B cell (primary cell): ENCODE measurements at regions of chr17 and their contacts with region 1.

Region 1: GRCh38 chr17:19992803-19993713 is 15.4 kb upstream of the AKAP10 start:
- DNase-seq: peak; percentile 86
- ATAC-seq: peak; percentile 99
- H3K4me3 ChIP-seq: no peak overlapping the region
- H3K4me3 Mint-ChIP-seq: no peak overlapping the region
- H3K27ac ChIP-seq: no peak overlapping the region
- H3K27ac Mint-ChIP-seq: no peak overlapping the region
- H3K4me1 ChIP-seq: peaks cover 3% of the 10 kb centered on the region in 2 donors
- H3K4me1 Mint-ChIP-seq: peaks cover 6% of the 10 kb centered on the region
- H3K27me3 ChIP-seq: peaks cover 0 to 6% (median 0%) of the 10 kb centered on the region in 4 experiments
- H3K27me3 Mint-ChIP-seq: peaks cover 28% of the 10 kb centered on the region
- CTCF ChIP-seq: peak; percentile 80

Region 2: DNA sequence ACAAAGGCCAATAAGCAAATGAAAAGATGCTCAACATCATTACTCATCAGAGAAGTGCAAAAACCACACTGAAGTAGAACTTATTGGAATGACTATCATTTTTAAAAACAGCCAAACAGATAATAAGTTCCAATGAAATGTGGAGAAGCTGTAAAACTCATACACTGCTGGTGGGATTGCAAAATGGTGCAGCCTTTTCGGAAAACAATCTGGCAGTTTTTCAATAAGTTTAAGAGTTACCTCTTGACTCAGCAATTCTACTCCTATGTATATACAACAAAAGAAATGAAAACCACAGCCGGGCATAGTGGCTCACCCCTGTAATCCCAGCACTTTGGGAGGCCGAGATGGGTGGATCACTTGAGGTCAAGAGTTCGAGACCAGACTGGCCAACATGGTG is 64.8 kb before region 1 on chr17:
- CTCF ChIA-PET with region 1: no interaction called
- POLR2A ChIA-PET with region 1: no interaction called
- intact Hi-C with region 1: no loop called
- DNase-seq: no peak
- ATAC-seq: no peak
- H3K4me3 ChIP-seq: no peak overlapping the region
- H3K4me3 Mint-ChIP-seq: no peak overlapping the region
- H3K27ac ChIP-seq: no peak overlapping the region
- H3K27ac Mint-ChIP-seq: no peak overlapping the region
- H3K4me1 ChIP-seq: no peaks in the 10 kb centered on the region
- H3K4me1 Mint-ChIP-seq: no peaks in the 10 kb centered on the region
- H3K27me3 ChIP-seq: no peaks in the 10 kb centered on the region
- H3K27me3 Mint-ChIP-seq: no peaks in the 10 kb centered on the region
- CTCF ChIP-seq: no peak

Region 3: DNA sequence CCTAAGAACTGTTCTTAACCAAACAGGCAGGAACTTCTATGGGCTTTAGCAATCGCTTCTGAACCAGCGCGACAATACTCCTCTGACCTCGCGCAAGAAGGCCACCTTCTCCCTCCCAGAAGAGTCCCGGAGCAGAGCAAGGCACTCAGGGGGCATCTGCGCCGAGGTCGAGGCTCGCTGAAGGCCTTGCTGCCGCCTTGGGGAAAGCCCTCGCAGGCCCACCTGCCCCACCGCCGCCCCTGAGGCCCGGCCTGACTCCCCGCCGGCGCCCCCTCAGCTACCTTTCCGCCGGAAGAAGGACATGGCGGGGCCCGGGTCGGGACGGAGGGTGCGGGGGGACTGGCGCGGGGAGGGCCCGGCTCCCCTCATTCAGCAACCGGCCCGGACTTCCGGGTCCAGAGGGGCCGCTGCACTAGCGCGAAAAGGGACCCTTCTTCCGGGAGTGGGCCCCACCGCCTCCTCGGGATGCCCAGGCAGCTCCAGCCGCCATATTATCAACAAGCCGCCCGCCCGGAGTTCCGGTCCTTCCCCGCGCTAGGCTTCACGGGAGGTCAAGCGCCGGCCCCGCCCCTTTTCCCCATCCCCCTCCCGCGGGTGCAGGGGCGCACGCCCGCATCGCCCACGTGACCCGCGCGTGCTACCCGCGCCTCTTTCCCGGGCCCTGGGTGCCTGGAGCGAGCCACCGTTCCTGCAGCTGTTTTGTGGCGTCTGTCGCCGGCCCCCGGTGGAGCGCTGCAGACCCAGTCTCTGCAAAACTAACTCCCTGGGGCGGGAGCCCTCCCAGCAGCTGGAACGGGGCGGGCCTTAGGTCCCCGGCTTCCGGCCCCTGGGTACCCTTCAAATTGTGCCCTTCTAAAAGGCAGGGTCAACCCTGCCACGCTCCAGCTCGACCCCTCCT is 15.5 kb before region 1 on chr17 and contains the start of gene AKAP10:
- CTCF ChIA-PET with region 1: interaction called, 12 read pairs
- POLR2A ChIA-PET with region 1: no interaction called
- intact Hi-C with region 1: no loop called
- DNase-seq: peak; percentile 94
- ATAC-seq: peak; percentile 87
- H3K4me3 ChIP-seq: peak within 1 kb of the TSS; percentile 83 to 93 (median 90)
- H3K4me3 Mint-ChIP-seq: peak within 1 kb of the TSS; percentile 99
- H3K27ac ChIP-seq: peak within 1 kb of the TSS; percentile 85 to 96
- H3K27ac Mint-ChIP-seq: peak within 1 kb of the TSS; percentile 98
- H3K4me1 ChIP-seq: peaks cover 23 to 40% of the 10 kb centered on the region in 2 donors
- H3K4me1 Mint-ChIP-seq: peaks cover 47% of the 10 kb centered on the region
- H3K27me3 ChIP-seq: no peaks in the 10 kb centered on the region
- H3K27me3 Mint-ChIP-seq: no peaks in the 10 kb centered on the region
- CTCF ChIP-seq: no peak
- total RNA-seq, gene AKAP10: 68.2 and 71.2 TPM in 2 replicates

Region 4: GRCh38 chr17:20009302-20010098 is 16.4 kb after region 1 on chr17 and contains the start of gene SPECC1:
- CTCF ChIA-PET with region 1: interaction called, 23 read pairs
- POLR2A ChIA-PET with region 1: no interaction called
- intact Hi-C with region 1: loop called (anchors 1 kb)
- DNase-seq: peak; percentile 90
- ATAC-seq: peak; percentile 98
- H3K4me3 ChIP-seq: peak within 1 kb of the TSS; percentile 64 to 74 (median 68)
- H3K4me3 Mint-ChIP-seq: peak within 1 kb of the TSS; percentile 94
- H3K27ac ChIP-seq: no peak within 1 kb of the TSS
- H3K27ac Mint-ChIP-seq: peak within 1 kb of the TSS; percentile 63
- H3K4me1 ChIP-seq: peaks cover 10 to 13% of the 10 kb centered on the region in 2 donors
- H3K4me1 Mint-ChIP-seq: peaks cover 11% of the 10 kb centered on the region
- H3K27me3 ChIP-seq: peaks cover 0 to 23% (median 16%) of the 10 kb centered on the region in 4 experiments
- H3K27me3 Mint-ChIP-seq: peaks cover 53% of the 10 kb centered on the region
- CTCF ChIP-seq: peak; percentile 99
- total RNA-seq, gene SPECC1: 6.1 and 7.4 TPM in 2 replicates

Region 5: DNA sequence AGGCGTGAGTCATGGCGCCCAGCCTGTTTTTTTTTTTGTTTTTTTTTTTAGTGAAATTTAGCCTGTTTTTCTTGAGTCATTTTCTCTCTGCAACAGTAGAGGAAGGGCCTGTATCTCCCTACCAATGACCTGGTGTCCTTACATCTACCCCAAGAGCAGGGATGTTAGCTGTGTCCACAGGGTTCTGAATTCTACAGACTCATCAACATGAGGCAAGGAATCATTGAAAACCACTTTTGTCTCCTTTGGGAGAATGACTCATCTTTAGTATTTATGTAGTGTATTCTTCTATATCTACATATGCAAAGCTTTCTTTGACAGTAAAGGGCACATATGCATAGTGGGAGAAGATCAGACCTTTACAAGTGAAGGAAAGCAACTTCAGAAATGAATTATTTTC is 121.4 kb after region 1 on chr17:
- CTCF ChIA-PET with region 1: interaction called, 39 read pairs
- POLR2A ChIA-PET with region 1: no interaction called
- intact Hi-C with region 1: no loop called
- DNase-seq: no peak
- ATAC-seq: no peak
- H3K4me3 ChIP-seq: no peak overlapping the region
- H3K4me3 Mint-ChIP-seq: no peak overlapping the region
- H3K27ac ChIP-seq: no peak overlapping the region
- H3K27ac Mint-ChIP-seq: no peak overlapping the region
- H3K4me1 ChIP-seq: no peaks in the 10 kb centered on the region
- H3K4me1 Mint-ChIP-seq: no peaks in the 10 kb centered on the region
- H3K27me3 ChIP-seq: no peaks in the 10 kb centered on the region
- H3K27me3 Mint-ChIP-seq: peaks cover 6% of the 10 kb centered on the region
- CTCF ChIP-seq: no peak

Region 6: DNA sequence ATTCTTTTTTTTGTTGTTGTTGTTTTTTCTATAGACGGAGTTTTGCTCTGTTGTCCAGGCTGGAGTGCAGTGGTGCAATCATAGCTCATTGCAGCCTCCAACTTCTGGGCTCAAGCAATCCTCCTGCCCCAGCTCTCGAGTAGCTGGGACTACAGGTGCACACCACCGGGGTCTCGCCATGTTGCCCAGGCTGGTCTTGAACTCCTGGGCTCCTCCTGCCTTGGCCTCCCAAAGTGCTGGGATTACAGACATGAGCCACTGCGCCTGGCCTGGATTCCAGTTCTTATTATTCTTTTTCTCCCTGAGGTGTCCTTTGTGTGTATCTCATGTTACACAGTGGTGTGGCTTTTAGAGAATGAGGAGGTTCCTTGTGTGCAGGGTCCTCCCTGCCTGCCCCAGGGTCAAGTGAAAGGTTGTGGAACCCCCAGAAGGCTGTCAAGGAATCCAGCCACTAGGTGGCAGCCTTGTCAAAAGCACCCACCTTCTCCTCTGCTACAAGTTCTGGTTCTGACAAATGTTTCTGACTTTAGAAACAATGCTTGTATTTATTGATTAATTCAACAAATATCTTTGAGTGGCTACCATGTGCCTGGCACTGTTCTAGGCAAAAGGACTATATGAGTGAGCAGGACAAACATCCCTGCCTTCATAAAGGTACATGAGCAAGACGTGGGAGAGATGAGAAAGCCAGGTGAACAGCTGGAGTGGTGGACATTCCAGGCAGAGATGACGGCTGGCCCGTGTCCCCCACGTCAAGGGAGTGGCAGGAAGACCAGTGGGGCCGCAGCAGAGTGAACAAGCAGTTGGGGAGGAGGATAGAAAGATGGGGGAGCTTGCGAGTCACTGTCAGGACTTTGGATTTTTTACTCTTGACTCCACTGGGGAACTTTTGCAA is 128.5 kb after region 1 on chr17:
- CTCF ChIA-PET with region 1: interaction called, 39 read pairs
- POLR2A ChIA-PET with region 1: no interaction called
- intact Hi-C with region 1: no loop called
- DNase-seq: peak; percentile 82
- ATAC-seq: peak; percentile 68
- H3K4me3 ChIP-seq: no peak overlapping the region
- H3K4me3 Mint-ChIP-seq: no peak overlapping the region
- H3K27ac ChIP-seq: no peak overlapping the region
- H3K27ac Mint-ChIP-seq: no peak overlapping the region
- H3K4me1 ChIP-seq: no peaks in the 10 kb centered on the region
- H3K4me1 Mint-ChIP-seq: no peaks in the 10 kb centered on the region
- H3K27me3 ChIP-seq: no peaks in the 10 kb centered on the region
- H3K27me3 Mint-ChIP-seq: peaks cover 15% of the 10 kb centered on the region
- CTCF ChIP-seq: peak; percentile 99

Region 7: GRCh38 chr17:20315821-20316220 is 322.8 kb after region 1 on chr17:
- CTCF ChIA-PET with region 1: interaction called, 10 read pairs
- POLR2A ChIA-PET with region 1: no interaction called
- intact Hi-C with region 1: no loop called
- DNase-seq: no peak
- ATAC-seq: no peak
- H3K4me3 ChIP-seq: no peak overlapping the region
- H3K4me3 Mint-ChIP-seq: no peak overlapping the region
- H3K27ac ChIP-seq: no peak overlapping the region
- H3K27ac Mint-ChIP-seq: no peak overlapping the region
- H3K4me1 ChIP-seq: peaks cover 0 to 2% of the 10 kb centered on the region in 2 donors
- H3K4me1 Mint-ChIP-seq: no peaks in the 10 kb centered on the region
- H3K27me3 ChIP-seq: no peaks in the 10 kb centered on the region
- H3K27me3 Mint-ChIP-seq: no peaks in the 10 kb centered on the region
- CTCF ChIP-seq: no peak

Region 8: GRCh38 chr17:20852239-20852989 is 859.4 kb after region 1 on chr17:
- CTCF ChIA-PET with region 1: no interaction called
- POLR2A ChIA-PET with region 1: no interaction called
- intact Hi-C with region 1: loop called (anchors 10 kb)
- DNase-seq: peak; percentile 48
- ATAC-seq: peak; percentile 56
- H3K4me3 ChIP-seq: peak overlapping the region in 1 of 5 experiments; percentile 1
- H3K4me3 Mint-ChIP-seq: peak overlapping the region; percentile 72
- H3K27ac ChIP-seq: no peak overlapping the region
- H3K27ac Mint-ChIP-seq: no peak overlapping the region
- H3K4me1 ChIP-seq: peaks cover 0 to 4% of the 10 kb centered on the region in 2 donors
- H3K4me1 Mint-ChIP-seq: peaks cover 15% of the 10 kb centered on the region
- H3K27me3 ChIP-seq: peaks cover 0 to 11% (median 1%) of the 10 kb centered on the region in 4 experiments
- H3K27me3 Mint-ChIP-seq: peaks cover 38% of the 10 kb centered on the region
- CTCF ChIP-seq: no peak